ENCODE measurements at regions of chr7 and their contacts with region 1.

Region 1: DNA sequence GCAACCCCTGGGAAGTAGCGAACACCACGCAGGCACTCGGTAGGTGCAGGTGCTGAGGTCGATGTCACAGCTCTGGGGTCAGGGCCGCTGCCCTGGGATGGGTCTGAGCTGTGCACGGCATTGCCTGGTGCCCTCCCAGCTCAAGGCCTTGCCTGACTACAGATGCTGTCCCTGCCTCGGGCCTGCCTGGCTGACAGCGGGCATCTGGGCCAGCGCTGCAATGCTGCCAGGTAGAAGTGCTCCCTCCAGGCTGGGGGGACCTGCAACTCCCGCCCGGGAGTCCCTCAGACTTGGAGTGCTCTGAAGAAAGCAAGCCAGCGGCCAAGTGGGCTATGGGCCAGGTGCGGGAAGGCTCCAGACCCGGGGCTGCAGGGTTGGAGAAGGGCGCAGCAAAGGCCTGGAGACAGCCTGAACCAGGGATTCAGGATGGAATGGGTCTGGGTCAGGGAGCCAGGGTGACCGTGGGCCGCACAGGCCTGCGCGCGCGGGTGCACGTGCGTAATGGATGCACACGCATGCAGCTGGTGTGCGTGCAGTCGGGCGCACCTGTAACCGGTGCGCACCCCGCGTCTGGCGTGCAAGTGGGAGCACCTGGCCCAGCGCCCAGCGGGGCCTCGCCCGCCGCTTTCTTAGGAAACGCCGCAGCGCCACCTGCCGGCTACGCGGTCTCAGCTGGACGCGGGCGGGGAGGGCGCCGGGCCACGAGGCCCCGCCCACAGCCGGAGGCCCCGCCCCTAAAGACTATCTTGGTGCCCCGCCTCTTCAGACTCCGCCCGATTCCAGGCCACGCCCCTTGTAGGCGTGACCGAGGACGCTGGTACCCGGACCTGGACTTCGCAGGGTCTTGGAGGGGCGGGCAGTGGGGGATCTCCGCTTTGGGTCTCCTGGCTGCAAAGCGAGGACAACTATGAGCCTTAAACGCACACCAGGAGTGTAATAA is 46.7 kb downstream of the MICALL2 start:
- DNase-seq: peak; percentile 90
- H3K4me3 ChIP-seq: no peak overlapping the region
- H3K27ac ChIP-seq: no peak overlapping the region
- H3K4me1 ChIP-seq: no peaks in the 10 kb centered on the region
- H3K27me3 ChIP-seq: peaks cover 6% of the 10 kb centered on the region
- CTCF ChIP-seq: peak; percentile 76

Region 2: DNA sequence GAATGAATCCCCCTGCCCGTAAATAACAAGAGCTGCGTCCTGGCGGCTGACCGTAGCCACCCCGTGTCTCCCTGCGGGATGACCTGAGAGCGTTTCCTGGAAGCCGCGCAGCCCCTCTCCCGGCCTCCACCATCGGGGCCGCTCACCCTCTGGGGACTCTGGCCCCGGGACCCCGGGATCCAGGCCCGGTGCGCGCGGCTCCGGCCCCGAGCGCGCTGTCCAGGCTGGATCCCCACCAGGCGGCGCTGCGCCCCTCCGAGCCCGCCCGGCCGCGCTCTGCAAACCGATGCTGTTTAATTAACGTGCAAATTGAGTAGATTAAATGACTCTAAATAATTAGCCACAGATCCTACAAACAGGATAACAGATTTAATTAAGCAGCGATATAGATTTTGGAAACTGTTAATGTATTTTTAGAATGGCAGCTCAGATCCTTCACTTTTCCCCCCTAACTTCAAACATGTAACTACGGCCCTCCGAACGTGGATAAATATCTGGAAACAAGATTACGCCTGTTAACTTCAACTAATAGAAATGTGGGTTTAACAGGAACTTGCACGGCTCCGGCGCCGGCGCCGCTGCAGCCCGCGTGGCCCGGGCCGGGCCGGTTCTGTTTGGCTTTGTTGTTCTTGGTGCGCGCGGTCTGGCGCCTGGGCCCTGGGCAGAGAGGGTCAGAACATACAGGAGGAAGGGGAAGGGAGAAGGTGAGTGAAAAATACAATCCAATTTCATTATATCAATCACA is 187.0 kb before region 1 on chr7:
- intact Hi-C with region 1: loop called (anchors 5 kb)
- DNase-seq: peak; percentile 24
- H3K4me3 ChIP-seq: no peak overlapping the region
- H3K27ac ChIP-seq: no peak overlapping the region
- H3K4me1 ChIP-seq: no peaks in the 10 kb centered on the region
- H3K27me3 ChIP-seq: peaks cover 72% of the 10 kb centered on the region
- CTCF ChIP-seq: peak; percentile 72

Region 3: GRCh38 chr7:1494447-1494846 is 81.9 kb after region 1 on chr7:
- intact Hi-C with region 1: no loop called
- DNase-seq: no peak
- H3K4me3 ChIP-seq: no peak overlapping the region
- H3K27ac ChIP-seq: no peak overlapping the region
- H3K4me1 ChIP-seq: no peaks in the 10 kb centered on the region
- H3K27me3 ChIP-seq: no peaks in the 10 kb centered on the region
- CTCF ChIP-seq: no peak

Region 4: GRCh38 chr7:1593091-1593866 is 180.7 kb after region 1 on chr7:
- intact Hi-C with region 1: no loop called
- DNase-seq: no peak
- H3K4me3 ChIP-seq: no peak overlapping the region
- H3K27ac ChIP-seq: no peak overlapping the region
- H3K4me1 ChIP-seq: no peaks in the 10 kb centered on the region
- H3K27me3 ChIP-seq: no peaks in the 10 kb centered on the region
- CTCF ChIP-seq: no peak

Region 5: GRCh38 chr7:1939434-1940401 is 527.1 kb after region 1 on chr7:
- intact Hi-C with region 1: no loop called
- DNase-seq: no peak
- H3K4me3 ChIP-seq: peak overlapping the region; percentile 19
- H3K27ac ChIP-seq: peak overlapping the region; percentile 40
- H3K4me1 ChIP-seq: no peaks in the 10 kb centered on the region
- H3K27me3 ChIP-seq: no peaks in the 10 kb centered on the region
- CTCF ChIP-seq: no peak